Head of caudate nucleus (tissue), 42 donors: ENCODE measurements at regions of chr4 and their contacts with region 1.

Region 1: DNA sequence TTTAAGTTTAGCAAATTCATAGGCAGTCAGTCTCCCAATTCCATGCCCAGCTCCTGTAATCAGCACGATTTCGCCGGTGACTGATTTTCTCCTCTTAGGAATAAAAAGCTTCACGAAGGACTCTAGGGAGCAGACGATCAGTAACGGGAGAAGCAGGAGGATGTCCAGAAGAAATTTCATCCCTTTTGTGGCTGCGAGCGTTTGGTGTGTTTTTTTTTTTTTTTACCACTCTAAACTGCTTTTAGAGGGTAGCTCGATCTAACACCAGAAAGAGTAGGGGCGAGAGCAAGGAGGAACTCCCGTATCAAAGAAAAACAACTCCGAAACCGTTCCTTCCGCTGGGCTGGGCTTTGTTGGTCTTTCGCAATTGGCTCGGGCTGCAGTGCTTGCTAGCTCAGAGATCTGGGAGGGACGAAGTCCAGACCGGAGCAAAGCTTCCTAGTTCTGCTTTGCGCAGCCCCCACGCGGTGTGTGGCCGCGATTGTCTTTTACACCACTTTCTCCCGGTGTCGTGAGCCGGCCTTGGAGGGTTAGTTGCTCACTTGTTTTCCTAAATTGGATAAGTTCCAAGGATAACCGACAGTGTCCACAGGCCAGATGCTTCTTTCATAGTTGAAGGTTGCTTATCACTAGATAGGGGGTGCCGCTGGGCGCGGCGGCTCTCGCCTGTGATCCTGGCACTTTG is at the start of gene HSD17B11:
- DNase-seq: peak; percentile 63 to 90 (median 83)

Region 2: GRCh38 chr4:87087420-87087819 is 303.6 kb before region 1 on chr4:
- intact Hi-C with region 1: no loop called
- DNase-seq: no peak

Region 3: DNA sequence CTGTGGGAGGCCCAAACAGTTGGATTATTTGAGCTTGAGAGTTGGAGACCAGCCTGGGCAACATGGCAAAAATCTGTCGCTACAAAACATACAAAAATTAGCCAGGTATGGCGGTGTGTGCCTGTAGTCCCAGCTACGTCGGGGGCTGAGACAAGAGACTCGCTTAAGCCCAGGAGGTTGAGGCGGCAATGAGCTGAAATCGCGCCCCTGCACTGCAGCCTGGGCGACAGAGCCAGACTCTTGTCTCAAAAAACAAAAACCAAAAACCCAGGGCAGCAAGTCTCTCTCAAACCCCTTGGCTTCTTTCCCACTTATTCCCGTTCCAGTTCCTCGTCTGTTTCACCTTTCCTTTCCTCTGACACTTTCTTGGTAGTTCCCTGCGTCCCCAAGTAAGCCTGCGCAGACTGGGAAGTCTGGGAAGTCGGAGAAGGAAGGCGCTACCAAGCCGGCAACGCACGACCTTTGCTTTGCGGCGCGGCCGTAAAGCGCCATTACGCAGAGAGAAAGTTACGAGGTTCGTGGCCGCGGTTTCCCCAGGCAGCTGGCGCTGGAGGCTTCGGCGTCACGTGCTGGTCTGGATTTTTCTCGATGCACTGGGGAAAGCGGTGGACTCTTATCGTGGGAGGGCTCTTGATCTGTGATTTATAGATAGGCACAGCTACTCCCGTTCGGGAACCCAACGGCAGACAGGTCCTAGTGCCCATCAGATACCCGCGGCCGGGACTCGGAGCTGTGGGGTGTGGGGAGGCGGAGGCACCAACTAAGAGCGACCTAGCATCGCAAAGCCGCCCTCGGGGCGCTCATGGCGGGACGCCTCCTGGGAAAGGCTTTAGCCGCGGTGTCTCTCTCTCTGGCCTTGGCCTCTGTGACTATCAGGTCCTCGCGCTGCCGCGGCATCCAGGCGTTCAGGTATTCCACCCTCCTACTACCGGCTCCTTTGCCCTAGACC is 31.3 kb after region 1 on chr4 and contains the start of gene NUDT9:
- intact Hi-C with region 1: loop called (anchors 2 kb)
- DNase-seq: peak; percentile 91 to 98 (median 96)

Region 4: DNA sequence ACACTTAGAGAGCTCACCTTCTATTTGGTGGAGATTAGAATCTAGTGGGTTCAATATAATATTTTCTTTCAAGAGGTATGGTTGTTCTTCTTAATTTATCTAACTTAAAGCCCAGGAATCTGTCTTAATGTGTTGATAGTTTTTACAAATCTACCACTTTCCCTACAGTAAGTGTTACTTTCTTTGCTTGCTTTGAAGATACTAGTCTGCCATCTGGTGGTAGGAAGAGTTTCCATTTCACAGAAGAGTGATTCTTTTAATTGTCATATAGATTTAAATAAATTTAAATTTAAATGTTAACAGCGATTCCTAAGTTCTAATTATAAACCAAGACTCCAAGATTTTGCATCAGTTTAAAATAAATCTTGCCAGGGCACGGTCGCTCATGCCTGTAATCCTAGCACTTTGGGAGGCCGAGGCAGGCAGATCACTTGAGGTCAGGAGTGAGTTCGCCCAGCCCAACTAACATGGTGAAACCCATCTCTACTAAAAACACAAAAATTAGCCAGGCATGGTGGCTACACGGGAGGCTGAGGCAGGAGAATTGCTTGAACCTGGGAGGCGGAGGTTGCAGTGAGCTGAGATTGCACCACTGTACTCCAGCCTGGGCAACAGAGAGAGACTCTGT is 74.8 kb after region 1 on chr4:
- intact Hi-C with region 1: loop called (anchors 10 kb)
- DNase-seq: peak in 4 of 42 donors; percentile 15 to 59 (median 20)